Right ventricle myocardium superior (tissue), 1 donor: ENCODE measurements at regions of chr13 and their contacts with region 1.

Region 1: DNA sequence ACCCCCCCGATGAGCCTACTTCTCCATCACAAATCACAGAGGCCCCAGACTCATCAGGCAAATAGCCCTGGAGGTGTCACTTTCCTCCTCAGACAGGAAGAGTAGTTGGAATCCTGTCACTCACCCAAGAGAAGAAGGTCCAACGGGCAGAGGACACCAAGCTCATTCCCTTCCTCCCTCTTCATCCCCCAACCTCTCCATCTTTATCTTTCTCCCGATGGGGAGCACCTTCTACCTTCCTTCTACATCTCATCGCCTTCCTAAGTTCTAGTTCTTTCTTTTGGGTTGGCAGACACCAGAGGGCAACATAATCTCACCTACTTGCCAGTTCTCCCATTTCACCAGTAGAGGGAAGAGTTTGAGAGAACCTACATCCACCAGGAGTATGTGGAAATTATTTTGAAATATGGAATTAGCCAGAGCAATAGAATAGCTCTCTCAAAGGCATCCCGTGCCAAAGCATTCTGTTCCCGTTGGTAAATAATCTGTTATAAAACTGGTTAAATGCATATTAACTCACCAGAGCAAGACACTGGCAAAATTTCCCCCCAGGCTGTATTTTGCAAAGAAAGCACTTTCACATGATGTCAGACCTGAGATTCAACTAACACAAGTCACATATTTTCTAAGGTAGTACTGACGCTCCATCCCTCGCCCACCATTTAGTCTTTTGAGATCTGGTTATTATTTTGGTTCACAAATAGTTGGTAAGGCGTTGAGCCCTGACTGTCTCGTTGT is 55.0 kb downstream of the ZIC5 start:
- DNase-seq: no peak
- ATAC-seq: peak; percentile 82

Region 2: GRCh38 chr13:99606324-99607066 is 310.0 kb before region 1 on chr13:
- intact Hi-C with region 1: no loop called
- DNase-seq: peak; percentile 94
- ATAC-seq: peak; percentile 98

Region 3: DNA sequence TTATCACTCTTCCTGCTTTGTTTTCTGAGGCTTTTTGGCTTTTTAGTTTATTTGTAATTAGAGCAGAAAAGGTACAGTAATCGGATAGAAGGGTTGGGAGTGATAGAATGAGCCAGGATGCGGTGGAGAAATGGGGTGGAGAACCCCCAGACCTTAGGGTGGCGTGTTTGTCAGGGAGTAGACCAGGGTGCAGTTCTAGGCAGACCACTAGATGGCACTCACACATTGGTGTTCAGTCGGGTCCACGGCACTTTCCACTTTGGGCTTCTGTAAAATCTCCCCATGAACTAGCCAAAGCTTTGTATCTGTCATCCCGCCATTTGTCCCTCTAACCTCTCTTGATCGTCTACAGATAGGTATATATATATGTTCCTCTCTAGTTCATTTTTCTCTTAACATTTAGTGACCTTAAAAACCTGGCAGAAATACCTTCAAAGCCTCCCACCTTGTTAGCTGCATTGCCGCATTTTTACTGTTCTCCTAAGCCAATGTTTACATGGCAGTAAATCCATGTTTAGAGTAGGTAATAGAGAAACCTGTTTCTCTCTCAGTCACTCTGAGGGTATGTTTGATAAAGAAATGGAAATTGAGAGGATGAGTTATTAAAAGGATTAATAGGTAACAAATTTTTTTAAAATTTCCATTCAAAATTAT is 260.3 kb before region 1 on chr13:
- intact Hi-C with region 1: loop called (anchors 5 kb)
- DNase-seq: peak; percentile 64
- ATAC-seq: peak; percentile 76

Region 4: DNA sequence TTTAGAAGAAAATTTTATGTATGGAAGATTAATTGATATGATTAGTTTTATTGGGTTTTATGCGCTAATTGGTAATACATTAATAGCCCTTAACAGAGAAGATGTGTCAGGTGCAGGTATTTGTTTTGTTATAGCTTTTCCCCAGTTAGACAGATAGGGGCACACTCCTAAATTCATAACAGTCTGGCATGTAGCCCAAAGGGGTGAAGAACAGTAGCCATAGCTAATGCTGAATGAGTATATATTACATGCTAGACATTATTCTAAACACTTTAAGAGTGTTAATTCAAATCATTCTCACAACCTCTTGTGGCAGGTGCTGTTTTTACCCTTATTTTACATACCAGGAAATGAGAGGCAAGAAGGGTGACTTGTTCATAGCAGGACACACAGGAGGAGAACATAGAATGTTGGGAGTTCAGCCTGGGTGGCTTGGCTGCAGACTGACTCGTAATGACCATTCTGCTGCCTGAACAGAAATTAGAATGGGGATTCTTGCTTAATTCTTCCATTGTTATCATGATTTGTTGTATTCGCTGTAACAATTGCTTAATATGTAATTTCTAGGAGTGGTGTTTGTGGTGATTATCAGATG is 192.5 kb after region 1 on chr13:
- intact Hi-C with region 1: no loop called
- DNase-seq: no peak
- ATAC-seq: no peak

Region 5: GRCh38 chr13:100234524-100235136 is 318.1 kb after region 1 on chr13:
- intact Hi-C with region 1: loop called (anchors 5 kb)
- DNase-seq: no peak
- ATAC-seq: no peak

Region 6: DNA sequence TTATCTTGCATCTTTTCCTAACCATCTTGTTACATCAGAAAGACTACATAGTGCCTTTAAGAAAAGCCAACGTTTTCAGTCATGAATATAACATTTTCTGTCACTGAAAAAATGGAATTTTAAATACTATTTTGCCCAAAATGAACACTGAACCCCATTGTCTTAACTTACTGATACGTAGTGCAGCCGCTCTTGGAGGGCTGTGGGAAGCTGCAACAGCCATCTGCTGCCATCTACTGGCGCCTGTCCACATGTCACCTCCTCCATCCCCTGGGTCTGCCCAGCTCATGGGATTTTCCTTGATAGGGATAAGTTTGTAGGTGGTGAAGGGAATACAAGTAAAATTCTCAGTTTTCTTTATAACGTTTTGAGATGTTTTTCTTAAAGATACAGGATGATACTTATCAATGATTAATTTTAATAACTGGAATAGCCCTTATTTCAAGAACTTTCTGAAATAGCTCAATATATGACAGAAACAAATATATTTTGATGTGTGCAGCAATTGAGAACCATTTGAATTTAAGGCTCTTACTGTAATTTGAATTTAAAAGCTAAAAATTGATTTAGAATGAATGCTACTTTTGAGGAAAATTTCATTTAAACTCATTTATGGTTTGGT is 598.4 kb after region 1 on chr13:
- intact Hi-C with region 1: loop called (anchors 5 kb)
- DNase-seq: peak; percentile 86
- ATAC-seq: peak; percentile 94